ENCODE measurements at regions of chr12 and their contacts with region 1.

Region 1: DNA sequence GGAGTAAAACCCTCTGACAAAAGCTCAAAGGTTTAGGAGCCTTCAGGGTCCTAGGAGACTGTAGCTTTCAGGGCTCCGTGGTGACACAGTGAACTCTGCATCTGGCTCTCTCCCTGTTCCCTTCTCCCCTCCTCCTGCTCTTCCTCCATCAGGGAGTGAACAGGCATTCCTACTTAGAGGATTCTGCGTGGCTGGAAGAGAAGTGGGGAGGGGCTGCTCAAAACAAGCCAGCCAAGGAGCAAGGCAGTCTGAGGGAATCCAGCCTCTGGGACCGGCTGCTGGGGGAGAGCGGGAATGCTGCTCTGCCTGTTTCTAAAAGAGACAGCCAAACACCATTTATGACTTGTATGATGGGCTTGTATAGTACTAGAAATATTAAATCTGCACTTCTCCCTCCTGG is 49.5 kb downstream of the RBMS2 start:
- DNase-seq: no peak
- H3K4me3 ChIP-seq: no peak overlapping the region
- H3K27ac ChIP-seq: no peak overlapping the region
- H3K4me1 ChIP-seq: 0 out of 4 replicates have a peak, but pooled peaks cover 0 to 5% of the 10 kb centered on the region in 2 experiments
- H3K27me3 ChIP-seq: no peaks in the 10 kb centered on the region
- CTCF ChIP-seq: no peak
- EP300 ChIP-seq: no peak
- RAD21 ChIP-seq: no peak

Region 2: DNA sequence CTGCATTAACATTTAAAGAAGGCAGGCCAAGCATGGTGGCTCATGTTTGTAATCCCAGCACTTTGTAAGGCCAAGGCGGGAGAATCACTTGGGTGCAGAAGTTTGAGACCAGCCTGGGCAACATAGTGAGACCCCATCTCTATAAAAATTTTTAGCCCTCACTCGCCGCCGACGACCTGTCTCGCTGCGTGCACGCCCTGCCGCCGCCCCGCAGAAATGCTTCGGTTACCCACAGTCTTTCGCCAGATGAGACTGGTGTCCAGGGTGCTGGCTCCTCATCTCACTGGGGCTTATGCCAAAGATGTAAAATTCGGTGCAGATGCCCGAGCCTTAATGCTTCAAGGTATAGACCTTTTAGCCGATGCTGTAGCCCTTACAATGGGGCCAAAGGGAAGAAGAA is 60.3 kb before region 1 on chr12:
- CTCF ChIA-PET with region 1: interaction called, 40 read pairs
- POLR2A ChIA-PET with region 1: no interaction called
- DNase-seq: no peak
- H3K4me3 ChIP-seq: no peak overlapping the region
- H3K27ac ChIP-seq: no peak overlapping the region
- H3K4me1 ChIP-seq: no peaks in the 10 kb centered on the region
- H3K27me3 ChIP-seq: no peaks in the 10 kb centered on the region
- CTCF ChIP-seq: no peak
- EP300 ChIP-seq: no peak
- RAD21 ChIP-seq: no peak

Measured in SK-N-SH (cell line).